ENCODE measurements at regions of chr11 and their contacts with region 1.

Region 1: GRCh38 chr11:120335908-120336640 is at the start of gene ARHGEF12:
- DNase-seq: peak; percentile 98
- ATAC-seq: peak; percentile 34 to 86 (median 74)
- H3K4me3 ChIP-seq: peak within 1 kb of the TSS; percentile 59 to 99 (median 90)
- H3K27ac ChIP-seq: peak within 1 kb of the TSS; percentile 91 to 100 (median 98)
- H3K4me1 ChIP-seq: peaks cover 0 to 67% (median 45%) of the 10 kb centered on the region in 12 donors
- H3K27me3 ChIP-seq: peaks cover 0 to 50% (median 0%) of the 10 kb centered on the region in 9 donors
- CTCF ChIP-seq: peak in 9 of 12 donors; percentile 5 to 66 (median 34)
- POLR2A ChIP-seq: peak in 1 of 2 donors; percentile 64
- total RNA-seq, gene ARHGEF12: 79.3 to 140 (median 114) TPM

Region 2: DNA sequence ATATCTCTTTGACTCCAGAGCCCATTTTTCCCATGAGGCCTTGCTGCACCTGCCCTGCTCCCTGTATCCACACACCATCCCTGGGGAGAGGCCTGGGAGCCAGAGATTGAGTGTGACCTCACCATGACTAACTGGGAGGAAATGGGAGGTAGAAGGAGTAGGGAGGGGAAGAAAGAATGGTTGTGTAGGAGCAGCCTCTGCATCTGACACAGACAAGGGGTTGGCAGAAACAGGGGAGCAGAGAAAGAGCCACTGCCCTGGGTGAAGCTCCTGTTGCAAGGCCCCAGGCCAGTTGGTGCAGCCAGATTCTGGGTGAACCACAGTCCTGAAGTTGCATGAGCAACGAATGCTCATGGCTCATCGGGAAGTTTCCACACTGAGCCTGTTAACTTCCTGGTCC is 63.8 kb before region 1 on chr11:
- intact Hi-C with region 1: no loop called
- DNase-seq: no peak
- ATAC-seq: peak in 1 of 4 donors; percentile 22
- H3K4me3 ChIP-seq: no peak overlapping the region
- H3K27ac ChIP-seq: no peak overlapping the region
- H3K4me1 ChIP-seq: no peaks in the 10 kb centered on the region
- H3K27me3 ChIP-seq: peaks cover 0 to 22% (median 9%) of the 10 kb centered on the region in 9 donors
- CTCF ChIP-seq: no peak
- POLR2A ChIP-seq: no peak

Region 3: GRCh38 chr11:120375076-120375475 is 39.0 kb after region 1 on chr11:
- intact Hi-C with region 1: loop called in 1 of 10 experiments (anchors 5 kb)
- DNase-seq: no peak
- ATAC-seq: peak in 2 of 4 donors; percentile 42 to 45
- H3K4me3 ChIP-seq: no peak overlapping the region
- H3K27ac ChIP-seq: peak overlapping the region in 8 of 12 donors; percentile 34 to 74 (median 44)
- H3K4me1 ChIP-seq: peaks cover 9 to 74% (median 53%) of the 10 kb centered on the region in 12 donors
- H3K27me3 ChIP-seq: no peaks in the 10 kb centered on the region
- CTCF ChIP-seq: no peak
- POLR2A ChIP-seq: no peak

Region 4: DNA sequence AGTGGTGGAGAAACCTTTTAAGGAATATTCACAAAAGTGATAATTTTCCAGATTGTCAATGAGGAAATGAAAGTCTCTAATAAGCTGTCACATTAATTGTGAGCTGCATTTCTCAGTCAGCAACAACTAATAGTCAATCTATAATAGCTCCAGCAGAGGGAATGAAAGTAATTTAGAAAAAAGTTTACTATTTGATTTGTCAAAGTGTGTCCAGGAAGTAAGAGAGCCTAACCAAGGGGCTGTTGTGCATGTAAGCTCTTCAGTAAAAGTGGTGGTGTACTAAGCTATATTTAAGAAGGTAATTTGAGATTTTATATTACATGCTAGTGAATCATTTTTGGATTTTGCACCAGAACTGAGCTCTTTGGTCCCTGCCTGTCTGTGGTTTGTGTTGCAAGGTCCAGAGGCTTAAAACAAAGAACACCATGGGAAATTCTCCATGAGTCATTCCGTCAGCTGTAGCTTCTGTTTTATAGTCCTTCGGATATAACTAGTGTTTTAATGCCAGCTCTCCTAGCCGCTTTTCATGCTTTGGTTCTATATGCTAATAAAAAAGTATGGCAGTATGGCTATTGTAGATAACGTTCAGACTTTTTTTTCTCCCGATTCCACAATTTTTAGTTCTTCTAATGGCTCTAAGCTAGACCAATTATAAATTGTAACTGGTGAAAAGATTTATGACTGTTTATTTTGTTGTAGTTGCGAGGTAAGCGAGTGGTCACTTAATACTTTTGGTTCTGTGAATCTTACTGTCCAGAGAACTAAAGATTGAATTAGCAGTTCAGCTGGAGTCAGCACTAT is 64.7 kb after region 1 on chr11:
- intact Hi-C with region 1: loop called in 7 of 10 experiments (anchors 5 to 10 kb)
- DNase-seq: no peak
- ATAC-seq: peak in 3 of 4 donors; percentile 84 to 93 (median 88)
- H3K4me3 ChIP-seq: peak overlapping the region in 4 of 12 donors; percentile 5 to 12 (median 10)
- H3K27ac ChIP-seq: peak overlapping the region in 7 of 12 donors; percentile 17 to 60 (median 44)
- H3K4me1 ChIP-seq: peaks cover 6 to 86% (median 64%) of the 10 kb centered on the region in 12 donors
- H3K27me3 ChIP-seq: no peaks in the 10 kb centered on the region
- CTCF ChIP-seq: no peak
- POLR2A ChIP-seq: no peak

Region 5: GRCh38 chr11:120432056-120433018 is 96.3 kb after region 1 on chr11:
- intact Hi-C with region 1: loop called (anchors 1 to 10 kb)
- DNase-seq: peak in 3 of 5 donors; percentile 42 to 54 (median 43)
- ATAC-seq: peak; percentile 87 to 96 (median 94)
- H3K4me3 ChIP-seq: peak overlapping the region in 1 of 12 donors; percentile 6
- H3K27ac ChIP-seq: peak overlapping the region; percentile 12 to 87 (median 76)
- H3K4me1 ChIP-seq: peaks cover 0 to 24% (median 17%) of the 10 kb centered on the region in 12 donors
- H3K27me3 ChIP-seq: no peaks in the 10 kb centered on the region
- CTCF ChIP-seq: no peak
- POLR2A ChIP-seq: no peak

Region 6: GRCh38 chr11:120482149-120482548 is 146.1 kb after region 1 on chr11:
- intact Hi-C with region 1: loop called in 3 of 10 experiments (anchors 10 kb)
- DNase-seq: no peak
- ATAC-seq: no peak
- H3K4me3 ChIP-seq: no peak overlapping the region
- H3K27ac ChIP-seq: no peak overlapping the region
- H3K4me1 ChIP-seq: peaks cover 0 to 8% (median 0%) of the 10 kb centered on the region in 12 donors
- H3K27me3 ChIP-seq: no peaks in the 10 kb centered on the region
- CTCF ChIP-seq: no peak
- POLR2A ChIP-seq: no peak

Region 7: GRCh38 chr11:121194731-121195596 is 858.9 kb after region 1 on chr11:
- intact Hi-C with region 1: loop called in 1 of 10 experiments (anchors 10 kb)
- DNase-seq: peak in 2 of 5 donors; percentile 29 to 40
- ATAC-seq: peak; percentile 55 to 81 (median 78)
- H3K4me3 ChIP-seq: no peak overlapping the region
- H3K27ac ChIP-seq: no peak overlapping the region
- H3K4me1 ChIP-seq: peaks cover 0 to 17% (median 0%) of the 10 kb centered on the region in 12 donors
- H3K27me3 ChIP-seq: peaks cover 0 to 20% (median 0%) of the 10 kb centered on the region in 9 donors
- CTCF ChIP-seq: peak; percentile 72 to 88 (median 83)
- POLR2A ChIP-seq: no peak